Activated CD4-positive, alpha-beta memory T cell treated with anti-CD3 and anti-CD28 coated beads, Interleukin-2, amount 10 ng/mL, durations not matched to agents 7 days and 5 days (primary cell): ENCODE measurements at regions of chr3 and their contacts with region 1.

Region 1: DNA sequence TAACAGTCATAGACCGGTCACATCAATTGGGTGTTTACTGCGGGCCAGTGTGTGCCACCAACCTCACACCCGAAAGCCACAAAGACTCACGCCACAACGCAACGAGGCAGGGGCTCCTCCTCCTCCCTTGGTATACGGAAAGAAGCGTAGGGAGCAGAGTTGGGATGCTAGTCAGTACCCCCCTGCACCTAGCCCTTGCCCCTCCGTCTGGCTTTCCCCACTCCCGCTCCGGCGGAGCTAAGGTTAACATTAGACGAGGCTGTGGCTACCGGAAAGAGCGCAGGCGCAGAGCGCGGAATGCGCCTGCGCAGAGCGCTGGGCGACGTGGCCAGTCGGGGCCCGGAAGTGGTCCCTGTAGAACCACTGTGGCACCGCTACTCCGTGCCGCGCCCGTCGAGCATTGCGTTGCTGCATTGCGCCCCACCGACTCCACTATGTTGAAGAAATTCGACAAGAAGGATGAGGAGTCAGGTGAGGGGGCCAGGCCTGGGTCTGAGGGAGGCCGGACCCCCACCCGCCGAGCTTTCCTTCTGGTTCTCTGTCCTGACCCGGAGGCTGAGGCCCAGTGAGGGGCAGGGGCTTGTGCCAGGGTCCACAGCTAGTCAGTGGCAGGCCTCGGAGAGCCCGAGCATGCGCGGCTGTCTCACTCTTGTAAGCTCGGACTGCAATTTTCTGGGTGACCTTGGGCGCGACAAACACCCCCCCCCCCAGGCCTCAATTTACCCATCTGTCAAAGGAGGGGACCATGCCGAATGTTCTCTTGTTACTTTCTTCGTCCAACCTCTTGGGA is at the start of gene COPG1:
- DNase-seq: peak; percentile 90
- H3K4me3 Mint-ChIP-seq: peak within 1 kb of the TSS; percentile 86
- H3K27ac Mint-ChIP-seq: peak within 1 kb of the TSS; percentile 92
- H3K4me1 Mint-ChIP-seq: peaks cover 63% of the 10 kb centered on the region
- H3K27me3 Mint-ChIP-seq: no peaks in the 10 kb centered on the region
- total RNA-seq, gene COPG1: 157 TPM

Region 2: GRCh38 chr3:128969993-128970739 is 279.3 kb before region 1 on chr3:
- CTCF ChIA-PET with region 1: interaction called, 66 read pairs
- POLR2A ChIA-PET with region 1: interaction called, 6 read pairs
- DNase-seq: peak; percentile 69
- H3K4me3 Mint-ChIP-seq: no peak overlapping the region
- H3K27ac Mint-ChIP-seq: no peak overlapping the region
- H3K4me1 Mint-ChIP-seq: peaks cover 10% of the 10 kb centered on the region
- H3K27me3 Mint-ChIP-seq: peaks cover 9% of the 10 kb centered on the region

Region 3: GRCh38 chr3:129052675-129053074 is 196.8 kb before region 1 on chr3:
- CTCF ChIA-PET with region 1: interaction called, 80 read pairs
- POLR2A ChIA-PET with region 1: interaction called, 7 read pairs
- DNase-seq: no peak
- H3K4me3 Mint-ChIP-seq: no peak overlapping the region
- H3K27ac Mint-ChIP-seq: peak overlapping the region; percentile 28
- H3K4me1 Mint-ChIP-seq: peaks cover 7% of the 10 kb centered on the region
- H3K27me3 Mint-ChIP-seq: peaks cover 18% of the 10 kb centered on the region

Region 4: GRCh38 chr3:129166579-129167332 is 82.7 kb before region 1 on chr3:
- CTCF ChIA-PET with region 1: interaction called, 17 read pairs
- POLR2A ChIA-PET with region 1: interaction called, 49 read pairs
- DNase-seq: no peak
- H3K4me3 Mint-ChIP-seq: no peak overlapping the region
- H3K27ac Mint-ChIP-seq: peak overlapping the region; percentile 16
- H3K4me1 Mint-ChIP-seq: peaks cover 37% of the 10 kb centered on the region
- H3K27me3 Mint-ChIP-seq: no peaks in the 10 kb centered on the region

Region 5: GRCh38 chr3:129224984-129225393 is 24.5 kb before region 1 on chr3:
- CTCF ChIA-PET with region 1: interaction called, 30 read pairs
- POLR2A ChIA-PET with region 1: interaction called, 27 read pairs
- DNase-seq: peak; percentile 42
- H3K4me3 Mint-ChIP-seq: no peak overlapping the region
- H3K27ac Mint-ChIP-seq: peak overlapping the region; percentile 73
- H3K4me1 Mint-ChIP-seq: peaks cover 50% of the 10 kb centered on the region
- H3K27me3 Mint-ChIP-seq: no peaks in the 10 kb centered on the region

Region 6: GRCh38 chr3:129278439-129278970 is 29.0 kb after region 1 on chr3 and contains the start of gene HMCES:
- CTCF ChIA-PET with region 1: interaction called, 3 read pairs
- POLR2A ChIA-PET with region 1: interaction called, 21 read pairs
- DNase-seq: peak; percentile 94
- H3K4me3 Mint-ChIP-seq: peak within 1 kb of the TSS; percentile 97
- H3K27ac Mint-ChIP-seq: peak within 1 kb of the TSS; percentile 91
- H3K4me1 Mint-ChIP-seq: peaks cover 51% of the 10 kb centered on the region
- H3K27me3 Mint-ChIP-seq: no peaks in the 10 kb centered on the region
- total RNA-seq, gene HMCES: 45.7 to 50.1 TPM